Endothelial cell of umbilical vein (primary cell): ENCODE measurements at regions of chr15 and their contacts with region 1.

Region 1: DNA sequence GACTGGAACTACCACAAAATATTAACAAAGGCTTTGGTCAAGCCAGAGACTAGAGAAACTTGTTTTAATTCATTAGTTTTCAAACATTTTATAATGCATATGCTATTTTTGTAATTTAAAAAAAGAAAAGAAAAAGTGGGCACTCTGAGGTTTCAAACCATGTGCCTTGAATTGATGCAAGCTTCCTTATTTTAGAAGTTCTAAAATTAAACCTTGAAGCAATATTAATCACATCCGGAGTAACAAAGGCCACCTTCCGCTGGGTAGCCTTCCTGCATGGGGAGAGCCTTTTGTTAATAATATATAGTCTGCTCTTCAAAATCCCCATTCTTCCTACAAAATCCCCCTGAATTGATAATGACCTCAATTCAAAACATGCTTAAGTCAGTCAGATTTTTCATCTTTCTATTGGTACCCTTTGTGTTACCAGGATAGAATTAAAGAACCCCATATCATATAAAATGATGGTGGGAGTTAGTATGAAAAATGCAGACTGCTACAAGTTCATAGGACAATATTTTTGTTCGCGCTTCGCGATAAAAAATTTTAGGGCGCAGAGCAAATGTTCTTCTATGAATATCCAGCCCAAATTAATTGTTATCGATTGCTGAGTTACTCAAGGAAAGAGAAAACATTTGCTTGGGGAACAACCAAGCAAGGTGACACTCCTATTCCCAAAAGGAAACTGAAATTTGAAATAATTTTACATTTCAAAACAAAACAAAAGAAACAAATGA is 30.6 kb downstream of the LDHAL6B start:
- DNase-seq: peak; percentile 84
- H3K4me3 ChIP-seq: no peak overlapping the region
- H3K27ac ChIP-seq: peak overlapping the region; percentile 92
- H3K4me1 ChIP-seq: peaks cover 30% of the 10 kb centered on the region
- H3K27me3 ChIP-seq: no peaks in the 10 kb centered on the region
- CTCF ChIP-seq: no peak
- POLR2A ChIP-seq: no peak

Region 2: DNA sequence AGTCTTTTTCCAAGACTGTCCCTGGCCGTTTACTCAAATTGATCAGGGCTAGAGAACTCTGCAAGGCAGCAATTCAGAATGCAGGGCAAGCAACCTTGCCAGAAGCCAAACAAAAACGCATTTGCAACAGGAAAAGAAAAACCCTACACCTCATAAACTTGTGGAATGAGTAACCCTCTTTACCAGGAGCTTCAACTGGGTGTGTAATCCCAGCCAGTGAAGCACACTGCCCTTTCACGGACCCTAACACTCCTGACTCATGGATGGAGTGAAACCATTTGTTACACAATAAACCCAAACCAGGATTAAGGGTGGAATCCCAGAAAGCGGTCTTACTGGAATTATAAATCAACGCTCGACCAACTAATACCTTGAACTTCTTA is 45.4 kb before region 1 on chr15:
- CTCF ChIA-PET with region 1: no interaction called
- POLR2A ChIA-PET with region 1: no interaction called
- dilution Hi-C with region 1: no loop called
- intact Hi-C with region 1: loop called (anchors 2 kb)
- DNase-seq: peak; percentile 75
- H3K4me3 ChIP-seq: peak overlapping the region in 1 of 3 experiments; percentile 1
- H3K27ac ChIP-seq: peak overlapping the region; percentile 87
- H3K4me1 ChIP-seq: peaks cover 27% of the 10 kb centered on the region
- H3K27me3 ChIP-seq: no peaks in the 10 kb centered on the region
- CTCF ChIP-seq: no peak
- POLR2A ChIP-seq: no peak

Region 3: DNA sequence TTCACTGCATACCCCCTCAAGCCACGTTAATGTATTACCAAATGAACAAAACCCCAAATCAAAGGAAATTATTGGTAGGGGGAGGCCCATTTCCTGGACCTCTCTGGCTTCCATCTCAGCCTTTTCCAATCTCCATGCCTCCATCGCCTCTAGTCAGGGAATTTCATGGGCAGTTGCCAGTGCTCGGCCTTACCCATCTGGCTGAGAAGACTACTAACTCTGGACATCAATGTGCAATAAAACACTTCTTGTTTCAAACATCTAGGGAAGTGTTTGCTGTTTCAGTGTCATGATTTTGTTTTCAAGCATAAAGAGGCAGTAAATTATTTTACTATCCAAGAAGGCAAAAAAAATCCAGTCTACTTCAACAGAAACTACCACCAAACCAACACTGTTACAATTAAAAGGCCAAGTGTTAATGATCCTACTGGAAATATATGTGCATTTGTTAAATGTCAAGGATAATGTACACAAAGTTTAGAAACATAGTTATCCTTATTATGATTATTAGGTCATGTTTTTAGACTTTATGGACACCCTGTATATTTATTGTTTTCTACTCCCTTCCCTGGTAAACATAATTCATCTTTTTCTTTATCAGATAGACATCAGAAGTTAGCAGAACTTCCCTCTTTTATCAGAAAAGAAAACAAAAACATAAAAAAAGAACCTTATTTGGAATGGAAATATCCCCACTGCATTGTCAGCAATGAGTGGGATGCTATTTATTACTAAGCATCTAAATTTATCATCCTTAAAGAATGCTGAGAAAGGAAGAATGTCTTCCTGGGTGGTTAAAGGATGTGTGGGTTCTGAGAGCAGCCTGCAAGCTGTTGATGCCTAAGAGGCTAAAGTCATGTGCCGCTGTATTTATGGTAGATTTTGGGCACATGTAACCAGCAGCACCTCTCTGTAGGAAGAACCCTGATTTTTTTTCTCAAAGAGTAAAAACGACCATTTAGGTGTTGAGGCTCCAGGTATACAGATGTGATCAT is 15.5 kb before region 1 on chr15:
- CTCF ChIA-PET with region 1: interaction called, 10 read pairs
- POLR2A ChIA-PET with region 1: no interaction called
- dilution Hi-C with region 1: no loop called
- intact Hi-C with region 1: loop called (anchors 1 kb)
- DNase-seq: no peak
- H3K4me3 ChIP-seq: no peak overlapping the region
- H3K27ac ChIP-seq: peak overlapping the region; percentile 26
- H3K4me1 ChIP-seq: peaks cover 57% of the 10 kb centered on the region
- H3K27me3 ChIP-seq: no peaks in the 10 kb centered on the region
- CTCF ChIP-seq: no peak
- POLR2A ChIP-seq: no peak

Region 4: GRCh38 chr15:59299929-59300617 is 62.8 kb after region 1 on chr15:
- CTCF ChIA-PET with region 1: interaction called, 3 read pairs
- POLR2A ChIA-PET with region 1: no interaction called
- dilution Hi-C with region 1: no loop called
- intact Hi-C with region 1: loop called (anchors 1 kb)
- DNase-seq: peak; percentile 94
- H3K4me3 ChIP-seq: peak overlapping the region in 1 of 3 experiments; percentile 28
- H3K27ac ChIP-seq: peak overlapping the region; percentile 78
- H3K4me1 ChIP-seq: peaks cover 54% of the 10 kb centered on the region
- H3K27me3 ChIP-seq: no peaks in the 10 kb centered on the region
- CTCF ChIP-seq: no peak
- POLR2A ChIP-seq: no peak